Dorsolateral prefrontal cortex (tissue), 120 donors: ENCODE measurements at regions of chr13 and their contacts with region 1.

Region 1: GRCh38 chr13:113816946-113817859 is 46.7 kb downstream of the GAS6 start:
- DNase-seq: peak; percentile 54 to 85 (median 80)
- H3K4me3 ChIP-seq: peak overlapping the region in 6 of 59 donors; percentile 1 to 35 (median 12)
- H3K27ac ChIP-seq: peak overlapping the region in 17 of 59 donors; percentile 1 to 58 (median 37)
- H3K27me3 ChIP-seq: no peaks in the 10 kb centered on the region
- CTCF ChIP-seq: peak; percentile 76 to 95 (median 88)

Region 2: GRCh38 chr13:113639616-113640262 is 177.5 kb before region 1 on chr13:
- intact Hi-C with region 1: no loop called
- DNase-seq: peak in 6 of 10 donors; percentile 11 to 53 (median 30)
- H3K4me3 ChIP-seq: no peak overlapping the region
- H3K27ac ChIP-seq: no peak overlapping the region
- H3K27me3 ChIP-seq: no peaks in the 10 kb centered on the region
- CTCF ChIP-seq: no peak

Region 3: GRCh38 chr13:113863436-113864272 is 46.5 kb after region 1 on chr13 and contains the start of gene GAS6:
- intact Hi-C with region 1: loop called (anchors 2 to 5 kb)
- DNase-seq: peak in 5 of 10 donors; percentile 25 to 76 (median 62)
- H3K4me3 ChIP-seq: peak within 1 kb of the TSS; percentile 55 to 92 (median 76)
- H3K27ac ChIP-seq: peak within 1 kb of the TSS in 58 of 59 donors; percentile 8 to 90 (median 74)
- H3K27me3 ChIP-seq: no peaks in the 10 kb centered on the region
- CTCF ChIP-seq: peak in 16 of 56 donors; percentile 3 to 39 (median 15)
- total RNA-seq, gene GAS6: 41.8 to 89.8 (median 62.7) TPM

Region 4: DNA sequence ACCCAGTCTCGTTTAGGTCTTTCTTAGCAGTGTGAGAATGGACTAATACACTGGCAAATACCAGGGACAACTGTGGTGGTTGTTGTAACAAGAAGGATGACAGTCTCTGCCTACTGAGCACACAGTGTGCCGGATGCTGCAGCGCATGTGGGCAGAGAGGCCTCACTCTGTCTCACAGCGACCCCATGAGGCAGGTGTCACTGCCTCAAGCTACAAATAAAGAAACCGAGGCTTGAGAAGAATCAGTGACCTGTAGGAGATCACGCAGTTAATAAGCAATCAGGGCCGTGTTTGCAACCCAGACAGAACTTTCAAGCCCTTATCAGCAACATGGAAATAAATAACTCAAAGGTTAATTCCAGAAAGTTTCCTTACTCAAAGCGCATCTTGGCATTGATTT is 87.2 kb after region 1 on chr13:
- intact Hi-C with region 1: loop called (anchors 2 to 5 kb)
- DNase-seq: peak in 7 of 10 donors; percentile 41 to 62 (median 58)
- H3K4me3 ChIP-seq: no peak overlapping the region
- H3K27ac ChIP-seq: no peak overlapping the region
- H3K27me3 ChIP-seq: no peaks in the 10 kb centered on the region
- CTCF ChIP-seq: peak in 55 of 56 donors; percentile 27 to 77 (median 58)

Region 5: GRCh38 chr13:113951246-113951999 is 134.2 kb after region 1 on chr13:
- intact Hi-C with region 1: loop called (anchors 2 to 5 kb)
- DNase-seq: peak in 9 of 10 donors; percentile 58 to 79 (median 68)
- H3K4me3 ChIP-seq: peak overlapping the region in 8 of 59 donors; percentile 12 to 32 (median 19)
- H3K27ac ChIP-seq: peak overlapping the region in 5 of 59 donors; percentile 11 to 53 (median 15)
- H3K27me3 ChIP-seq: no peaks in the 10 kb centered on the region
- CTCF ChIP-seq: peak in 55 of 56 donors; percentile 39 to 89 (median 71)